ENCODE measurements at regions of chr1 and their contacts with region 1.

Region 1: DNA sequence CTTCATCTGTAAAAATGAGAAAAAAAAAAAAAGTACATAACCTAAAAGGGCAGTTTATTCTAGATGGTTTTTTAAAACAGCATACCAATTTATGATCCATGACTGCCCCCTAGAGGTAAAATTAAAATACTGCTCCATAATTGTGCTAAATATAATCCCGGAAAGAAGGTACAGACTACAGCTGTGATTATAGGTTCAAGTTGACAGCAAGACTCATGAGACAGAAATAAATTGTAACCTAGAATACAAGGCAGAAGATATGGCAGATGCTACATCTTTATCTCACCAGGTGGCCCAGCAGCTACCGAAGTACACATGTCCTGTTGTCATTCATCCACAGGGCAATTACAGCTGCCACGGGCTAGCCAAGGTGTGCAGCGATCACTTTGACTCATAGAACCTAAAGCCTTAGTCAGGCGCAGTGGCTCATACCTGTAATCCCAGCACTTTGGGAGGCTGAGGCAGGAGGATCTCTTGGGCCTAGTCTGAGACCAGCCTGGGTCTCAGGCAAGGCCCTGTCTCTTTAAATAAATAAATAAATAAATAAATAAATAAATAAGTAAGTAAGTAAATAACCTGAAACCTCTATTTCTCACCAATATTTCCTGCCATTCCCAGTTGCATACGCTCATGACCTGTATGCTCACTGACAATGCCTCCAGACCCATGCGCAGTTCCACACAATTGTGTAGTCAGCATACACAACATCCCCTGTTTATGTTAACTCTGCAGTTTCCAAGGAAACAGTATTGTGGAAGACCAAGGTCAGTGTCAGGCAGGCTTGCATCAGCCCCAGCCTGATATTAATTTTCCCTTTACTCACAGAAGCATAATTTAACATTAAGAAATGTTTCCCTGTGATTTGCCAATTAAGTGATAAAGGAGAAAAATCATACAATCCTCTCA is 18.3 kb upstream of the PPIE start:
- DNase-seq: no peak
- ATAC-seq: peak; percentile 30 to 48

Region 2: GRCh38 chr1:39305555-39305954 is 414.8 kb before region 1 on chr1:
- intact Hi-C with region 1: no loop called
- DNase-seq: no peak
- ATAC-seq: no peak

Region 3: DNA sequence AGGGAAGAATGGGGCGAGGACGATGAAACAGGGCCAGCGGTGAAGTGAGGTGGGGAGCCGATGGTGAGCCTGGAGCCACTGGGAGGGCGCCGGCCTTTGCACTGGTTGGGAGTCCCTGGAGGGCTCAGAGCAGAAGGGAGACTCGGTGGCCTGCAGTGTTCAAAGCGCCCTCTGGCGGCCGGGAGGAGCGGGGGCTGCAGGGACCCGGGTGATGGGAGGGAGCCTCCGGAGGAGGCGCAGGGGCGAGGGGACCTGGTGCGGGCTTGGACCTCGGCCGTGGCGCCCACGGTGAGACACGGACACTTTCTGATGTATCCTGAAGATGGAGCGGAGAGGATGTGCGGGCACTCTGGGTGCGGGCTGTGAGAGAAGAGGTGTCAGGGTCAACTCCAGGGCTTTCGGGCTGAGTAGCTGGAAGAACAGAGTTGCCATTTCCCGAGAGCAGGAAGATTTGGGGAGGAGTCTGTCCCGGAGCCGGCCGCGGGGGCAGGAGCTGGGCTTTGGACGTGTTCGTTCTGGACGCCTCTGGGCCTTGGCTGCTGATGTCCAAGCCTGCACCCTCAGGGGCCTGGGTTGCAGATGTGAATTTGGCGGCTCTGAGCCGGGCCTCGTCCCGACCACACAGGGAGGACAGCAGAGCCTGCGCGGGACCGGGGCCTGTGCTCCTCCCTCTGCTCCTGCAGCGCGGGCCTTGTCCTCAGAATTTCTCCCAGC is 110.6 kb before region 1 on chr1:
- intact Hi-C with region 1: loop called (anchors 2 to 5 kb)
- DNase-seq: peak; percentile 81
- ATAC-seq: peak; percentile 83 to 84

Region 4: DNA sequence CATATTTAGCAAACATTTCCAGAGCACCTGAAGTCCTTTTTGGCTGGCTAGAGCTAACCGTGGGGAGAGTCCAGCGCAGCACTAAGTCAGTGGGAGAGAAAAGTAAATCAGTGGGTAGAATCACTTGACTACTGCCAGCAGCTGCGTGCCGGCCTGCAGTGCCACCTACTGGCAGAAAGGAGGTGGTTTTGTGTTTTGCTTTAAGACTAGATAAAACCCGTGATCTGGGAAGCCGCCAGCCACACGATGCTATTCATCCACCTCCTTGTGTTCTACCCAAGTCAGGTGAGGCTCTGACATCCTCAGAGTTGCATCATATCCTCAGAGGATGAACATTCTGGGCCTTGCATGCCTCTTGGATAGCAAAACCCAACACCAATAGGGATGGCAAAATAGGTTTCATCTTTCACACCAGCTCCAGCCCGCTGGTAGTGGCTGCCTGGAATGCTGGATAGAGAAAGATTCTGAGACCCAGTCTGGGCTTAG is 66.8 kb before region 1 on chr1:
- intact Hi-C with region 1: loop called in 1 of 2 experiments (anchors 5 kb)
- DNase-seq: peak; percentile 84
- ATAC-seq: peak; percentile 68 to 69

Region 5: DNA sequence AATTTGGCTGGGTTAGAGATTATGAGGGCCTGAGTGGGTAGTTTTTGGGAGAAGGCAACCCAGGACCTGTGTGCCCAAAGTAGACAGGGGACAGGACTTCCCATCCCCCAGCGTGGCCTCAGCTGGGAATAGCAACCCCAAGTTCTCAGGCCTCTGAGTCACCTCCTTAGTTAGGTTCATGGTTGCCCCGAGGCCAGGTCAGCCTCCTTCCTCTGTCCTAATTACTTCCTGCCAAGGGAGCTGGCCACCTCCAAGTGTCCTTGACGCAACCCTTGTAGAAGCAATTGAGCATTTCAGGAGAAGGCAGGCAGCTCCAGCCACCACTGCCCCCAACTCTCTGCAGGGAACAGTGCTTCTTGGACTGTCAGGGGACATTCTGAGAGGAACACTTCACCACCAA is 43.4 kb before region 1 on chr1:
- intact Hi-C with region 1: loop called in 1 of 2 experiments (anchors 5 kb)
- DNase-seq: no peak
- ATAC-seq: no peak

Region 6: DNA sequence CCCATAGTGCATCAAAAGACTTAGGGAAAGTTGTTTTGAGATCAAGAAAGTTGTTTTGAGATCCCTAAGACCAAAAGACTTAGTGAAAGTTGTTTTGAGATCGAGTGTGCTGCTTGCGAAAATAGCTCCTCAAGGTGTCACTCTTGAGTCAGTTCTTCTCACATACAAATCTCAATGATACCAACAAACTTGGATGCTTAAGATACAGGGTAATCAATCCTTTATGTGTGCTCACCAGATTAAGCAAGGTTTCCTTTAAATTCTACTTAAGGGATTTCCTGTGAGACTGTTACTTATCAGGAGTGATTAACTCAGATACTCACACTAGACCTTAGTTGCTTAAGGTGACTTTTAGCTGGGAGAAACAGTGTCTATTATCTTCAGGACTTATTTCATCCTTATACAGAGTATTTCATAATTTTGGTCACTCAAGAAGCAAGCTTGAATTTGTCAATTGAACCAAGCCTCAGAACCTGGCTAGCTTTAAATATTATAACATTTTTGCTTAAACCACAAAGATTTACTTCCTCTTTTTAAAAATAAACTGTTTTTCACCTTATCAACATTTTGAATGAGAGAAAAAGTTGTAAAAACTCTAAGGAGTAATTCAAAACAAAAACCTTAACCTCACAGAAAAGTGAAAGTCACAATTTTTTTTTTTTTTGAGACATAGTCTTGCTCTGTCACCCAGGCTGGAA is 432.9 kb after region 1 on chr1:
- intact Hi-C with region 1: no loop called
- DNase-seq: no peak
- ATAC-seq: no peak

Measured in left cardiac atrium (tissue), 4 donors.